GM10248 (cell line): ENCODE measurements at regions of chr1 and their contacts with region 1.

Region 1: DNA sequence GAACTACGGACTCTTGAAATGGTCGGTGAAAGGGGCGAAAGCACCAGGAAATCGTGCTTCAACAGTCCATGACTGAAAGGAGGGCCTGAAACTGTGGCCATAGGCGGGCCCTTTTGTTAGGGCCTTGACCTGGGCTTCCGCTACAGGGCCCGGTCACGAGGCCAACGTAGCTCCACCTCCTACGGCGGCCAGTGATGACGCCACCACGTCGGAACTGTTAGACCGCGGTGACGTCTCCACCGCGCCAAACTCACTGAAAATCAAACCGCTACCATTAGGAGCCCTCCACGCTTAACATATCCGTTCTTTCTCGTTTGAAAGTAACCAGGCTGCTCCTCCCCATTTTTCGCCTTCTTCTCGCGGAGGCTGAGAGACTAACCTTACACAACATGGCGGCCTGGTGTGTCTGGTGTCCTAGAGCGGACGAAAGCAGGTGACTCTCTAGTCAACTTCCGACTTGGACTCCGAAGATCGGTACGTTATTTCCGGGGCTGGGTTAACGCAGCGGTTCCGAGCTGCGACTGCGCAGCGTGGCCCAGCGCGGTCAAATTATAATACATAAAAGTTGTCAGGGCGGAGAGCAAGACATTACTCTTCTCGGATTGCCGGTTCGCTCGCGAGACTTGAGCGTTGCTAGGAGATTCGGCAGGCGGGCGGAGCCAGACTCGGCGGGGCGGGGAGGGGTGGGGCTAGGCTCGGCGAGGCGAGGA is 376 bp upstream of the CACYBP start:
- DNase-seq: peak; percentile 96
- CTCF ChIP-seq: no peak

Region 2: DNA sequence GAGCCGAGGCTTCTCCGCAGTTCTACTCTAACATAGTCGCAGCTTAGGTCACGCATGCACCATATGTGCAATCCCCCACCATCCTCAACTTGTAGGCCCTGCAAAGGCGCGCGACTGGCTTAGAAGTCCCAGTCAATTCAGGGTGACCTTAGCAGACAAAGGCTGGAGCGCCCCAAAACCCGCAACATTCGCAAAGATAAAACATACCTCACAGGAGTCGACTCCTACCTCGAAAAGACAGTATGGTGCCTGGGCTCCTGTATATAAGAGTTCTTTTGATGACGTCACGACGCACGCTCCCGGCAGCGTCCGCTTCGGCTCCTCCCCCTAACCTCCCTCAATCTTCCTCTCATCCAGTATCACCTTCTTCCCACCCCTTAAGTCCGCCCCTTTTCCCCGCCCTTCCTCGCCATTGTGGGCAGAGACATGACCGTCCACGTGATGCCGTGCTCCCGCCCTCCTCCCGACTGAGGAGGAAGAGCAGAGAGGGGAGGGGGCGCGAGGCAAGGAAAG is 1131.6 kb before region 1 on chr1 and contains the start of gene GAS5:
- CTCF ChIA-PET with region 1: interaction called, 3 read pairs
- POLR2A ChIA-PET with region 1: interaction called, 11 read pairs
- DNase-seq: peak; percentile 95
- CTCF ChIP-seq: no peak

Region 3: DNA sequence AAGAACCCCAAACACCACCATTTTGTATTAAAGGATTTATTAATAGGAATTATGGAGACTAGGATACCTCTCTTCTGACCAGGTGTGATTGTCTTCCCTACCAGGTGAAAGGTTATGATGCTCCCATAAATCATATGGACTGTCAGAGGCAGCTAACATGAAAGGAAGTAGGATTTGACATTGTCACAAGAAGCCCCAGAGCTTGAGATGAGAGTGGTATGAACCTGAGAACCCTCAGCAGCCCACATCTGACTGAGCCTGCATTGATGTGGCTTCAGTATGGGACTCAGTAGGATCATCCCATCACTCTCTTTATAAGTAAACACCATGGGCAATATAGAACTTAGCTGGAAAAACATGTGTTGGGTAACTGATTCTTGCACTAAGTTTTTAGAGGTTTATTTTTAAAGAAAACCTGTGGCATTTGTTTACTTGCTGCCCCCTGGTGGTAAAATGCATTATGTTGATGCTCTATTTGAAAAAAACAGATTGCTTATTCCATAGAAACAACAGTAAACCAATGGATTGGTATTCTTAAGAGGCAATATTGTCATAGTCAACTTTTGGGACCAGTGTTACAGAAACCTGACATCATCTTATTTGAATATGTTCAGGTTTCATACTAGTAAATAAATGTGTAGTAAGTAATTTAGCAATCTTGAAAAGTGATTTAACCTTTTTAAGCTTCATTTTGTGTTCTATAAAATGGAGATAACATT is 16.2 kb before region 1 on chr1:
- CTCF ChIA-PET with region 1: interaction called, 58 read pairs
- POLR2A ChIA-PET with region 1: interaction called, 5 read pairs
- DNase-seq: no peak
- CTCF ChIP-seq: peak; percentile 47

Region 4: DNA sequence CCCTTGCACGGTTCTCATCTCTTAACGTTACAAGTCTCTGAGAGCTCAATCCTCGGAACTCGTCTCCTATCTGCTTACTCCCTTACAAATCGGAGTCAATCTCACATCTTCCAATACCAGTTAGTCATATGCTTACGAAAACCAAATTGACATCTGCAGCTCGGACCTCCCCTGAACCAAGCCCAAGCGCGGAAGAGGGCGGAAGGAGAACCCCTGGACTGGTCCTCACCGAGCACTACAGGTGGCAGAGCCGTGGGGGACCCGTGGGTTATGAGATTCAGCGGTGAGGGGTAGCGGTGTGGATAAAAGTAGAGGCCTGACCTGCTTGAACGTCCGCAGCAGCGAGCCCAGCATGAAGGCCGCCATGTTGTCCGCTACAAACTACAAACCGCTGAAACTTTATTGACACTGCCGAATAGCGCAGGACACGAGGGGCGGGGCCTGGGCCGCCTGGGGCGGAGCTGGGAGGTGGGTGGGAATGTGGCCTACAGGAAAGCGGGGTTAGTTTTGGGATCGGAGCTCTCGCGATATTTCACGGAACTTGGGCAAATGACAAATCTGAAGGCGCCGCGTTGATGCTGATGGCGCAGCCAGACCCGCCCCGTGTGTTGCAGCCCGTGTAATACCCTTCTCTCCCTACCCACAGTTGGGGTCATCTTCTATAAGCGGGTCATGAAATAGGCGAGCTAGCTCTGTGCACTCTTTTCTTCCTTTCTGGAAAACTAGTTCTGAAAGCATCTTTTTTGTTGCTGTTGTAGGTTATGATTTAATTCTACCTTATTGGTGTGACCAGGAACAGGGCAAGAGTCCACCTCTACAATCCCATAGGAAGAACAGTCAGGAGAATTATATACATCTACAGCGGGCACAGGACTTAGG is 23.9 kb after region 1 on chr1 and contains the start of gene MRPS14:
- CTCF ChIA-PET with region 1: interaction called, 5 read pairs
- POLR2A ChIA-PET with region 1: interaction called, 12 read pairs
- DNase-seq: peak; percentile 96
- CTCF ChIP-seq: no peak